ENCODE measurements at regions of chr11 and their contacts with region 1.

Region 1: GRCh38 chr11:36738292-36738861 is 140.3 kb upstream of the RAG2 start:
- DNase-seq: no peak
- H3K4me3 ChIP-seq: no peak overlapping the region
- H3K27ac ChIP-seq: no peak overlapping the region
- H3K4me1 ChIP-seq: no peaks in the 10 kb centered on the region
- H3K27me3 ChIP-seq: no peaks in the 10 kb centered on the region; a peak in 1 of 7 replicates
- CTCF ChIP-seq: no peak
- EP300 ChIP-seq: no peak
- POLR2A ChIP-seq: no peak
- RAD21 ChIP-seq: no peak

Region 2: DNA sequence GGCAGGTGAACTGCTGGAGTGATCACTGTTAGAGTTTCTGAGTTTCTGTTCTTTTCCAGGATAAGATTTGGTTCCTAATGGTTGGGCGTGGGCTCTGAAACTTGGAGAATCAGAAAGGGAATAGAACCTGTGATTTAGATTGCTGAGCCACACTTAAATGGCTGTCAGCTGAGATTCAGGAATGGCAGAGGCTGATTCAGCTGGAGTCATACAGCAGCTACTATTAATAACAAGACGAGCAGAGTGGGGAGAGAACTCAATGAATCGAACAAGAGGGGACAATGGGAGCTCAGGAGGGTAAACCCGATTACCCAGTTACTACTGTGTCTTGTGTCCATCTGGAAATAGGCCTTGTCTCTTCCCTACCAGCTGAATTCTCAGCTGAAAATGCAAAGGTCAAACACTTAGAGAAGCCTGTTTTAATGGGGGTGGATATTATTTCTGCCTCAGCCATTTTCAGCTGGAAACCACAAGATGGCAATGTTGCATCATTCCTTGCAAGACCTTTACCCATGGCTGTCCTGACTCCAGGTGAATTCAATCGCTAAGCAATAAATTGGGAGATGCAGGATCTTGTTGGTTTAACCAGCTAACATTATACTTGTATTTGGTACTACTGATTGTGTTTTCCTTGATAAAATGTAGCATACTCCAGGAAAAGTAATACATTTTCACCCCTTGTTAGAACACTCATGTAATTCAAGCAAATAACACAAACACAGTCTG is 35.9 kb before region 1 on chr11:
- CTCF ChIA-PET with region 1: interaction called, 364 read pairs
- POLR2A ChIA-PET with region 1: no interaction called
- DNase-seq: peak in 1 of 2 experiments; percentile 10
- H3K4me3 ChIP-seq: no peak overlapping the region
- H3K27ac ChIP-seq: no peak overlapping the region
- H3K4me1 ChIP-seq: peaks cover 0 to 9% (median 5%) of the 10 kb centered on the region in 4 experiments; a peak in 5 of 7 replicates
- H3K27me3 ChIP-seq: no peaks in the 10 kb centered on the region; a peak in 1 of 7 replicates
- CTCF ChIP-seq: peak in 2 of 3 experiments; percentile 92 to 96; a peak in 3 of 4 replicates
- EP300 ChIP-seq: no peak
- POLR2A ChIP-seq: no peak
- RAD21 ChIP-seq: peak; percentile 99

Region 3: GRCh38 chr11:36711106-36711825 is 27.1 kb before region 1 on chr11:
- CTCF ChIA-PET with region 1: interaction called, 201 read pairs
- POLR2A ChIA-PET with region 1: no interaction called
- DNase-seq: no peak
- H3K4me3 ChIP-seq: no peak overlapping the region
- H3K27ac ChIP-seq: no peak overlapping the region
- H3K4me1 ChIP-seq: no peaks in the 10 kb centered on the region
- H3K27me3 ChIP-seq: peaks cover 0 to 2% (median 0%) of the 10 kb centered on the region in 4 experiments; a peak in 1 of 7 replicates
- CTCF ChIP-seq: peak; percentile 13 to 50 (median 21); a peak in 3 of 4 replicates
- EP300 ChIP-seq: no peak
- POLR2A ChIP-seq: no peak
- RAD21 ChIP-seq: 0 out of 4 replicates have a peak, but pooled peaks of 1 of the 2 experiments have one; percentile 4